Sigmoid colon (tissue), 7 donors: ENCODE measurements at regions of chr2 and their contacts with region 1.

Region 1: GRCh38 chr2:62774555-62775366 is 69.2 kb downstream of the EHBP1 start:
- DNase-seq: peak; percentile 63
- H3K4me3 ChIP-seq: no peak overlapping the region
- H3K27ac ChIP-seq: peak overlapping the region in 3 of 4 donors; percentile 5 to 47 (median 39)
- H3K4me1 ChIP-seq: peaks cover 0 to 52% (median 8%) of the 10 kb centered on the region in 4 donors
- H3K27me3 ChIP-seq: no peaks in the 10 kb centered on the region
- CTCF ChIP-seq: peak; percentile 65 to 86 (median 70)
- EP300 ChIP-seq: no peak
- POLR2A ChIP-seq: no peak

Region 2: GRCh38 chr2:62456721-62457539 is 317.8 kb before region 1 on chr2:
- intact Hi-C with region 1: loop called (anchors 1 kb)
- DNase-seq: peak; percentile 85
- H3K4me3 ChIP-seq: peak overlapping the region; percentile 57 to 74 (median 62)
- H3K27ac ChIP-seq: peak overlapping the region; percentile 84 to 86 (median 84)
- H3K4me1 ChIP-seq: peaks cover 0 to 31% (median 24%) of the 10 kb centered on the region in 4 donors
- H3K27me3 ChIP-seq: no peaks in the 10 kb centered on the region
- CTCF ChIP-seq: peak; percentile 96 to 99 (median 98)
- EP300 ChIP-seq: no peak
- POLR2A ChIP-seq: no peak

Region 3: DNA sequence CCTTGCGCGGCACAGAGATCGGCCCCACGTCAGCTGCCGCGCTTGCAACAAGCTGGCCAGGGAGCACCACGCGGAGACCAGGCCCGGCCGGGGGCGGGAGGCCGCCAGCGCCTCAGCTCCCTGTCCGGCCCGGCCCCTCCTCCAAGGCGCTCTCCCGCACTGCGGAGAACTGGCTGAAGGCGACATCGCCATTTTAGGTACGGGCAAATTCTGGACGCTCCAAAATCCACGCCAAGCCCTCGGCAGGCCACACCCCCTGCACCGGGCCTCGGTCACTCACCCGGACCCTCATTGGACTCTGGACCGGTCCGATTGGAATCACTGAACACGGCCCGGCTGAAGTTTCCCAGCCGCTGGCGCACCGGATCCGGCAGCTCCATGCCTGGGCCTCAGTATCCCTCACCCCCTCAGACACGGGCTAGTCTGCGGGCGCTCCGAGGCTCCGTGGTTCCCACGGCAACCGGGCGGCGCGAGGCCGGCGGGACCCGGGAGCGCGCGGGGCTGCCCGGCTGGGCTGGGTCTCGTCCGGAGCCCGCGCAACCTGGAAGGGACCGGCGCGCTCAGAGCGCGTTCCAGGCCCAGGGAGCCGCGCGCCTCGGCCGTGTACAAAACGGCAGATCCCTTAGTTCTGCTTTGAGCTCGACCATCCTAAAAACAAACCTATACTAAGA is 268.9 kb before region 1 on chr2 and contains the start of gene TMEM17:
- intact Hi-C with region 1: loop called (anchors 5 kb)
- DNase-seq: peak; percentile 97
- H3K4me3 ChIP-seq: peak within 1 kb of the TSS; percentile 44 to 71 (median 66)
- H3K27ac ChIP-seq: peak within 1 kb of the TSS; percentile 89 to 92 (median 90)
- H3K4me1 ChIP-seq: peaks cover 0 to 15% (median 7%) of the 10 kb centered on the region in 4 donors
- H3K27me3 ChIP-seq: no peaks in the 10 kb centered on the region
- CTCF ChIP-seq: no peak
- EP300 ChIP-seq: peak in 1 of 4 donors; percentile 34
- POLR2A ChIP-seq: no peak
- total RNA-seq, gene TMEM17: 1.5 to 3.4 (median 2.1) TPM

Region 4: DNA sequence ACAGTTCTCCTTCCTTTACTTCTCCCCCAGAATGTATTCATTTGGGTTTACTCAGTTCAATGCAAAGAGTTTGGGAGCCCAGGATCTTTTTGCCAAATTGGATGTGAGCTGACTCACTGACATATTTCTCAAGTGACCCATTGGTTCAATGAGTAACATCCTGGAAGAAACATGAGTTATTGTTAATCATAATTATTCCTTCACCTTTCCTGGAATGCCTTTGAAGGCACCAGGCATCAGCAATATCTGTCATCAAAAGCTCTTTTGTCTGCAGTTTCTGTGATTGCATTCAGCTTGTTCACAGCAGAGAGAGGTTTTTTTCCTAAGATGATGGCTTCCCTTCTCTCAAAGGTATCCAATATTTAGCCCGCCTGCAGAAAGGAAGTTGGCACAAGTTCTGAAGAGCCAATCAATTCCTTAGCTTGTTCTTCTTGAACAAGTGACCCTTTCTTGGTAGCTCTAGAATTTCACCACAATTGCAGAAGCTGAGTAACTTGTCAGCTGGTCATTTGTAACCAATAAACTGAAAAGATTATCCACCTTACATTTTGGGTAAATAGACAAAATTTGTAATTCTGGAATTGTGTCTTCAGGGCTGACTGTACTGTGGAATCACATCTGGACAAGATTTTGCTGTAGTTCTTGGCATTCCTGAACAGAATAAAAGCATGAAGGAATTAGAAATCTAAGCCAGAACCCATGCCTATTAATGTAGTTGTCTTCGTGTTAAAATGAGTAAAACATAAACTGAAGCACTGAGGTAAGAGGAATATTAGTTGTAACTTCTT is 196.6 kb before region 1 on chr2:
- intact Hi-C with region 1: loop called (anchors 10 kb)
- DNase-seq: no peak
- H3K4me3 ChIP-seq: no peak overlapping the region
- H3K27ac ChIP-seq: peak overlapping the region; percentile 10 to 64 (median 56)
- H3K4me1 ChIP-seq: peaks cover 0 to 36% (median 28%) of the 10 kb centered on the region in 4 donors
- H3K27me3 ChIP-seq: no peaks in the 10 kb centered on the region
- CTCF ChIP-seq: no peak
- EP300 ChIP-seq: no peak
- POLR2A ChIP-seq: no peak

Region 5: DNA sequence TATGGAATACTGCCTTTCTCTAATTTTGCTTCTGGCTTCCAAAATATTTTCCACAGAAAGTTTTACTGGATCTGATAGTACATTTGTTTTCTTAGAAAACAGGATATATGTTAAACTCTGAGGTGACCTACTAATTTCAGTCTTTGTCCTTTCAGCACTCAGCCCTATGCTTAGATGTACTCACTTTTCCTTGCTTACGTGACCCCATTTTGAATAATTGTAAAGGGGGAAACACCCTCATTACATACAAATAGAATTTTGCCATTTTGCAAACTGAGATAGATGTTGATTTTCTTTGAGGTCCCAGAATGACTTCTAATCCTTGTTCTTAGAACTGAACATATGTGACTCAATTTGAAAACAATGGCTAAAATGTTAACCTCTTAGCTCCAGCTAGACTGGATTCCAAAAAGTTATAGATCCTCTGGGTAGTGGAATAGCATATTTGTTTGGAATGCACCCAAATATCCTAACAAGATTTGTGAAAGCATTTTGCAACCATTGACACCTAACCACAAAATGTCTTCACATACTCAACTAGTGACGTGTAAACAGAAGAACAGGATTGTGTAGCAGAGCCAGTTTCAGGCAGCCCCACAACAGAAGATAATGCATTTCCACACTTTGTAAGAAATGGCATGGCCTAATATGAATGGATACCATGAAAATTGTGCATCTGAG is 114.0 kb before region 1 on chr2:
- intact Hi-C with region 1: loop called (anchors 5 kb)
- DNase-seq: no peak
- H3K4me3 ChIP-seq: no peak overlapping the region
- H3K27ac ChIP-seq: peak overlapping the region; percentile 41 to 85 (median 82)
- H3K4me1 ChIP-seq: peaks cover 0 to 72% (median 60%) of the 10 kb centered on the region in 4 donors
- H3K27me3 ChIP-seq: no peaks in the 10 kb centered on the region
- CTCF ChIP-seq: no peak
- EP300 ChIP-seq: no peak
- POLR2A ChIP-seq: no peak

Region 6: DNA sequence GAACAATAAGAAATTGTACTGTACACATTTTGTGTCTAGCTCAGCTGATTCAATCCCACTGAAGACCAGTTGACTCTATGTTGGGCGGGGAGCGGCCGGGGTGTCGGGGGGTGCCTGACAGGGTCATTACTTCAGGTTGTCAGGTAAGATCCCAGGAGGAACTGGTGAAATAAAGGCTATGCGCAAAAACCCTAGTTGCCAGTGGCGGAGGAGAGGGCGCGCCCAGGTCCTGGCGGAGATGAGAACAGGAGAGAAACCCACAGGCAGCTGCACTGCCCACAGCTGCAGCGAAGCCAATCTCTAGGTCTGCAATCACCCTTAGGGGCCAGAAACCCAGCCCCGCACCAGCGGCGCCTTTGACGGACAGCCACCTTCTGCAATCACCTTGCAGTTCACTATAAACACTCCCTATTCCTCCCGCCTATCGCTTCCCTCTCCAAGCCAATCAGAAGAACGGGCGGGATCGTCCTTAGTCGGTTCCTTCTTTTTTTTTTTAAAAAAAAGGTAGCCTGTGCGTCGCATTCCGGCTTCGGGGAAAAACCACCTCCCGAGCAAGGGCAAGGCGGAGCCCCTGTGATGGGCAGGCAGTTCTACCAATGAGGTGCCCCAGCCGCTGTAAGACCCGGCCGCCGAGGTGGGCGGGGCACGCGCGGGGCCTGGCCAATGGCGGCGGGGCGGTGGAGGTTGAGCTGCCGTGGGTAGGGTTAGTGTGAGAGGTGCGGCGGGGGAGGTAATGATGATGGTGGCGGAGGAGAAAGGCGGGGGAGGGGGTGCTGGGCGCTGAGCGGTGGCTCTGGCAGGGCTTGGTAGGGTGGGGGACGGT is 69.5 kb before region 1 on chr2 and contains the start of gene EHBP1:
- intact Hi-C with region 1: loop called (anchors 2 kb)
- DNase-seq: peak; percentile 100
- H3K4me3 ChIP-seq: peak within 1 kb of the TSS; percentile 79 to 98 (median 94)
- H3K27ac ChIP-seq: peak within 1 kb of the TSS; percentile 94 to 99 (median 98)
- H3K4me1 ChIP-seq: peaks cover 0 to 57% (median 40%) of the 10 kb centered on the region in 4 donors
- H3K27me3 ChIP-seq: no peaks in the 10 kb centered on the region
- CTCF ChIP-seq: no peak
- EP300 ChIP-seq: peak in 1 of 4 donors; percentile 42
- POLR2A ChIP-seq: peak; percentile 82 to 84
- total RNA-seq, gene EHBP1: 121 to 161 (median 153) TPM